CD8-positive, alpha-beta memory T cell (primary cell): ENCODE measurements at regions of chr17 and their contacts with region 1.

Region 1: DNA sequence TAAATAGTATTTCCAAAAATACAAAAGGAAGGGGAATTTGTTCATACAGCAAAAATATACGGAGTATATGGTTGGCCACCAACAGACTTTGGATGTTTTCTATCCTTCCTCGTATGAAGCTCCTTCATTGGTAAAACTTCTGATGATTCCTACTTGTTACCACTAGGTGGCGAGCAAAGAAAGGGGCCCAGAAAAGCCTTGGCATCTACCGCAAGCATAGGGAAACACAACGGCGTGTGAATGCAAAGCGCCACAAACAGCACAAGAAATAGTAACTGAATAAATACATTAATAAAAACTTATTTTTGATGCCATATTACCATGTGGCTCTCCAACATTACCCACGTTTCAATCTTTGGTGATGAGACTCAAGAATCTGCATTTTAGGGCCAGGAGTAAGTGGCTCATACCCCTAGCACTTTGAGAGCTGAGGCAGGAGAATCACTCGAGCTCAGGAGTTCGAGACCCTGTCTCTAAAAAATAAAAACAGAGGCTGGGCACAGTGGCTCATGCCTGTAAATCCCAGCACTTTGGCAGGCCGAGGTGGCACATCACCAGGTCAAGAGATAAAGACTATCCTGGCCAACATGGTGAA is 34.5 kb downstream of the YWHAE start:
- DNase-seq: peak; percentile 42 to 77 (median 71)
- H3K4me3 ChIP-seq: no peak overlapping the region
- H3K4me3 Mint-ChIP-seq: peak overlapping the region in 2 of 7 donors; percentile 10 to 19
- H3K27ac ChIP-seq: no peak overlapping the region
- H3K27ac Mint-ChIP-seq: peak overlapping the region; percentile 55 to 82 (median 76)
- H3K4me1 ChIP-seq: peaks cover 50% of the 10 kb centered on the region
- H3K4me1 Mint-ChIP-seq: peaks cover 51 to 81% (median 77%) of the 10 kb centered on the region in 3 donors
- H3K27me3 ChIP-seq: no peaks in the 10 kb centered on the region
- H3K27me3 Mint-ChIP-seq: no peaks in the 10 kb centered on the region

Region 2: DNA sequence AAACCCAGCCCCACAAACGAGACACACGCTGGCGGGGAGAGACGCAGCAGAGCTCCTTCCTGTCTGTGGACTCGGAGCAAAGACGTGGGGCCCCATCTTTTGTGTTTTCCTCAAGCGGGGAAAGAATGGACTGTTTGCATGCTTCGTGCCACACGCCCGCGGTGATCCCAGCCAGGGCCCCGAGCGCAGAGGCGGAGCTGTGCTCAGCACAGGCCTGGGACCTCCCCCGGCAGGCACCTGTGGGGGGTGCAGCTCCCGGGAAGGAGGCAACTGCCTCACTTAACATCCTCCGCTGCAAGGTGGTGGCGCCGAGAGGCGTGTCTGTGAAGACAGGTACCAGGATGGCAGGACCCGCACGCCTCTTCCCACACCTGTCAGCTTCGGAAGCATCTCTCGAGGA is 66.9 kb before region 1 on chr17:
- CTCF ChIA-PET with region 1: no interaction called
- POLR2A ChIA-PET with region 1: no interaction called
- DNase-seq: peak; percentile 9 to 63 (median 22)
- H3K4me3 ChIP-seq: peak overlapping the region; percentile 29
- H3K4me3 Mint-ChIP-seq: peak overlapping the region in 6 of 7 donors; percentile 24 to 48 (median 28)
- H3K27ac ChIP-seq: no peak overlapping the region
- H3K27ac Mint-ChIP-seq: peak overlapping the region in 1 of 8 donors; percentile 36
- H3K4me1 ChIP-seq: peaks cover 54% of the 10 kb centered on the region
- H3K4me1 Mint-ChIP-seq: peaks cover 33 to 46% (median 39%) of the 10 kb centered on the region in 3 donors
- H3K27me3 ChIP-seq: no peaks in the 10 kb centered on the region
- H3K27me3 Mint-ChIP-seq: peaks cover 9 to 12% of the 10 kb centered on the region in 2 donors

Region 3: GRCh38 chr17:1351971-1352370 is 13.6 kb before region 1 on chr17:
- CTCF ChIA-PET with region 1: interaction called, 10 read pairs
- POLR2A ChIA-PET with region 1: no interaction called
- DNase-seq: no peak
- H3K4me3 ChIP-seq: no peak overlapping the region
- H3K4me3 Mint-ChIP-seq: no peak overlapping the region
- H3K27ac ChIP-seq: no peak overlapping the region
- H3K27ac Mint-ChIP-seq: peak overlapping the region in 1 of 8 donors; percentile 29
- H3K4me1 ChIP-seq: no peaks in the 10 kb centered on the region
- H3K4me1 Mint-ChIP-seq: peaks cover 13 to 36% (median 29%) of the 10 kb centered on the region in 3 donors
- H3K27me3 ChIP-seq: no peaks in the 10 kb centered on the region
- H3K27me3 Mint-ChIP-seq: no peaks in the 10 kb centered on the region

Region 4: GRCh38 chr17:1379930-1380313 is 14.4 kb after region 1 on chr17:
- CTCF ChIA-PET with region 1: interaction called, 19 read pairs
- POLR2A ChIA-PET with region 1: interaction called, 5 read pairs
- DNase-seq: peak in 1 of 5 donors; percentile 50
- H3K4me3 ChIP-seq: no peak overlapping the region
- H3K4me3 Mint-ChIP-seq: peak overlapping the region in 6 of 7 donors; percentile 35 to 88 (median 62)
- H3K27ac ChIP-seq: no peak overlapping the region
- H3K27ac Mint-ChIP-seq: peak overlapping the region; percentile 8 to 87 (median 78)
- H3K4me1 ChIP-seq: peaks cover 83% of the 10 kb centered on the region
- H3K4me1 Mint-ChIP-seq: peaks cover 65 to 77% (median 74%) of the 10 kb centered on the region in 3 donors
- H3K27me3 ChIP-seq: no peaks in the 10 kb centered on the region
- H3K27me3 Mint-ChIP-seq: peaks cover 0 to 2% of the 10 kb centered on the region in 2 donors

Region 5: GRCh38 chr17:1390433-1391367 is 25.2 kb after region 1 on chr17:
- CTCF ChIA-PET with region 1: interaction called, 16 read pairs
- POLR2A ChIA-PET with region 1: interaction called, 4 read pairs
- DNase-seq: no peak
- H3K4me3 ChIP-seq: no peak overlapping the region
- H3K4me3 Mint-ChIP-seq: peak overlapping the region in 4 of 7 donors; percentile 1 to 60 (median 26)
- H3K27ac ChIP-seq: no peak overlapping the region
- H3K27ac Mint-ChIP-seq: peak overlapping the region in 7 of 8 donors; percentile 13 to 84 (median 67)
- H3K4me1 ChIP-seq: peaks cover 89% of the 10 kb centered on the region
- H3K4me1 Mint-ChIP-seq: peaks cover 72 to 92% (median 85%) of the 10 kb centered on the region in 3 donors
- H3K27me3 ChIP-seq: no peaks in the 10 kb centered on the region
- H3K27me3 Mint-ChIP-seq: no peaks in the 10 kb centered on the region

Region 6: DNA sequence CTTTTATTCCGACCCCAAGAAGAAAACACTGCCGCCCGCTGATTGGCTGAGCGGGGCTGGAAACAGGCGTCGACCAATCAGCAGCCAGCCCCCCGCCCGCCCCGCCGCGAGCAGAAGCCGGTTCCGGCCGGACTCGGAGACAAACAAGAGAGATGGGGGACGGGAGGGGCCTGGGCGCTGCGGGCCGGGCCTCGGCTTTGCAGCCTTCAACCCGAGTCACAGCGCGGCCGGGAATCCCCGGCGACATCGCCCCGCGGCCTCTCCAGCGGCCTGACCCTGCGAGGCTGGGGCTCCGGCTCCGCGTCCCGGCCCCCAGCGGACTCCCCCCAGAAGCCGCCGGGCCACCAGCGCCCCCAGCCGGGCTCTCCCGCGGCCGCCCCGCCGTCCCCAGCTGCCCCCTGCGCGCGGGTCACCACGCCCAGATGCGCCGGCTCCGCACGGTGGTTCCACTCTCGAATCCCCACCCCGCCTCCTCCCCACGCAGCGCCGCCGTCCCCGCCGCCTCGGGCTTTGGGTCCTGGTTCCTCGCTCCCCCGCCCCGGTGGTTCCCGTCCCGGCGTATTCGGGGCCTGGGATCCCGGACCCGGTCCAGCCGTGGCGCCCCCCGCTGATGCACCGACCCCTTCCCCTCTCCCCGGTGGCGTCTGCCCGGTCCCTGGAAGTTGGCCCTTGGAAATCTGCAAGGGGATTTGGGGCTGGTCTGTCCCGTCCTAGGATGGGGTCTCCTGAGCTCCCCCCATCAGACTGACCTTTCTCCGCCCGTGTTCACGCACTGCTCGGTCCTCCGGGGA is 263.5 kb after region 1 on chr17:
- CTCF ChIA-PET with region 1: interaction called, 10 read pairs
- POLR2A ChIA-PET with region 1: interaction called, 5 read pairs
- DNase-seq: peak; percentile 83 to 94 (median 86)
- H3K4me3 ChIP-seq: peak overlapping the region; percentile 77
- H3K4me3 Mint-ChIP-seq: peak overlapping the region; percentile 91 to 97 (median 94)
- H3K27ac ChIP-seq: peak overlapping the region; percentile 69
- H3K27ac Mint-ChIP-seq: peak overlapping the region; percentile 75 to 94 (median 86)
- H3K4me1 ChIP-seq: peaks cover 17% of the 10 kb centered on the region
- H3K4me1 Mint-ChIP-seq: peaks cover 10 to 24% (median 11%) of the 10 kb centered on the region in 3 donors
- H3K27me3 ChIP-seq: no peaks in the 10 kb centered on the region
- H3K27me3 Mint-ChIP-seq: peaks cover 0 to 4% of the 10 kb centered on the region in 2 donors